HAP-1 (cell line): ENCODE measurements at regions of chr22 and their contacts with region 1.

Region 1: GRCh38 chr22:23984430-23984829 is 4.5 kb downstream of the GSTT2 start:
- DNase-seq: peak; percentile 43 to 56
- H3K4me3 ChIP-seq: no peak overlapping the region
- H3K4me1 ChIP-seq: no peaks in the 10 kb centered on the region
- H3K27me3 ChIP-seq: no peaks in the 10 kb centered on the region

Region 2: DNA sequence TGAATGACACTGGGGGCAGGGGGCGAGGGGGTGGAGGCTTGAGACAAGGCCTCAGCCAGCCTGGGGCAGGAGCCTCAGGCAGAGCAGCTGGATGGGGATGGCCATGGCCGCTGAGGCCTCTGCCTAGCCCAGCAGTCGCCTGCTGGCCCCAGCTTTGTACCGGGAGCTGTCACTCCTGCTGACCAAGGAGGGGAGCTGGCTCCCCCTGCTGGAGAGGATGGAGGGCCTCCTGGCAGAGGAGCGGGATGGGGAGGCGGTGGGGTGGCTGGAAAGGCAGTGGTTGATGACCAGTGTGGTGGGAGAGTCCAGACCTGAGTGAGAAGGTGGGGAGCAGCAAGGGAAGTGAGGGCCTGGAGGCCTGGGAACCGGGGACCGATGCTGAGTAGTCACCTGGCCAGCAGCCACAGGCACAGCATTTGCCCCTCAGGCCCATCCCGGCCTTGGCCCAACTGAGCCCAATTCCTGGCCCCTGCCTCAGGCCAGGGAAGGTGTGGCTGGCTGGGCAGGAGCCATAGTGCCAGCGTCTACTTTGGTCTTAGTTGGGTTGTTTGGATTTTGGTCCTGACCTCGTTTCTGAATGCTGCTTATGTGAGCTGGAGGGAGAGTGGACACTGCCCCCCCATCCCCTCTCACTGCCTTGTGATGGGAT is 190.9 kb after region 1 on chr22:
- in situ Hi-C with region 1: loop called (anchors 10 kb)
- DNase-seq: peak; percentile 16 to 83
- H3K4me3 ChIP-seq: no peak overlapping the region
- H3K4me1 ChIP-seq: no peaks in the 10 kb centered on the region
- H3K27me3 ChIP-seq: no peaks in the 10 kb centered on the region